Activated B cell treated with CpG ODN at 0.5 μM for 24 hours (primary cell): ENCODE measurements at regions of chr7 and their contacts with region 1.

Region 1: GRCh38 chr7:101882595-101883564 is 65.5 kb downstream of the CUX1 start:
- DNase-seq: no peak
- ATAC-seq: no peak
- H3K4me3 Mint-ChIP-seq: no peak overlapping the region
- H3K27ac Mint-ChIP-seq: no peak overlapping the region
- H3K4me1 Mint-ChIP-seq: peaks cover 61% of the 10 kb centered on the region
- H3K27me3 Mint-ChIP-seq: no peaks in the 10 kb centered on the region
- CTCF ChIP-seq: no peak

Region 2: GRCh38 chr7:101823096-101823495 is 59.8 kb before region 1 on chr7:
- CTCF ChIA-PET with region 1: no interaction called
- POLR2A ChIA-PET with region 1: interaction called, 15 read pairs
- intact Hi-C with region 1: no loop called
- DNase-seq: no peak
- ATAC-seq: no peak
- H3K4me3 Mint-ChIP-seq: no peak overlapping the region
- H3K27ac Mint-ChIP-seq: no peak overlapping the region
- H3K4me1 Mint-ChIP-seq: peaks cover 29% of the 10 kb centered on the region
- H3K27me3 Mint-ChIP-seq: no peaks in the 10 kb centered on the region
- CTCF ChIP-seq: no peak